ENCODE measurements at regions of chr9 and their contacts with region 1.

Region 1: GRCh38 chr9:113484258-113484730 is 20.8 kb downstream of the RGS3 start:
- DNase-seq: no peak

Region 2: DNA sequence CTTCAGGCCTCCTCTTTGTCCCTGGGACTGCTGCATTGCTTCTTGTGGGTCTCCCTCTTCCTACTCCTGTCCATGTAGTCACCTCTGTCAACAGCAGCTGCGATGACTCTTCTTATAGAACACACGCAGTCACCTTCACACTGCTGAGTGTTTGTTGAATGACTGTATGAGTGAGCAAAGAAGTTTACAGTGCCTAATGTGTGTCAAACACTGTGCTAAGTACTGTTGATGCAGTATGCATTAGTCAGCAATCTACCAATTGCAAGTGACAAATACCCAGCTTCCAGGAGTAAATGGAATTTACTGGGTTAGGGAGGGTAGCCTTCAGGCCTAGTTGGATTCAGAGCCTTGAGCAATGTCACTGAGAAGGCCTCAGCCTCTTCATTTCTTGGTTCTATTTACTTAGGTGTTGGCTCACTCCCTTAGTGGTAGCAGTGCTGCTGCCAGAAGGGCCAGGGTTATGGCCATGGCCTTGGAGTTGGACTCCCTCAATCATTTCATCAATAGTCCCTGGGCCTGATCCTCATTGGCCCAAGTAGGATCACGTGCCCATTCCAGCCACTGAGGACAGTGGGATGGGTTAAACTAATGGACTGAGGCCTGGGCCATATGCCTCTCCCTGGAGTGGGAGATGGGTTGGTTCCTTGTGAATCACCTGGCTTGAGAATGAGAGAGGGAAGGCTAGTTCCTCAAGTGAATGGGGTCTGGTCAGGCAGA is 72.7 kb after region 1 on chr9:
- intact Hi-C with region 1: loop called in 1 of 2 experiments (anchors 2 kb)
- DNase-seq: peak; percentile 44

Region 3: GRCh38 chr9:113568571-113569321 is 84.5 kb after region 1 on chr9:
- intact Hi-C with region 1: no loop called
- DNase-seq: peak; percentile 54

Region 4: DNA sequence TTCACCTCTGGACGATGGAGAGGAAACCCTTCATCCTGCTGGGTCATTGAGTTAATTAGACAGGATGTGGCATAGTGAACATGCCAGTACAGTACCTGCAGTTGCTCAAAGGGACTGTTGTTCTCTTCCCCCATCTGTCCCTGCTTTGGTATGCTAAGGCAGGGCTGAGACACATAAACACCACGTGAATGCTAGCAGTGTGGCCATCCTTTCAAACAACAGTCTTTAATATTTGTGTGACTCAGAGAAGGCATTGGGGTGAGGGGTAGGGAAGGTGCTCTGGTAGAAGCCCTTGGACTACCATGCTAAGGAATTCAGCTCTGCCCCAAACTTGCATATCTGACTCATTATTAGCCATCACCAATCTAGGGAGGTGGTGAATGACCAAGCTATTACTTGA is 211.6 kb after region 1 on chr9:
- intact Hi-C with region 1: no loop called
- DNase-seq: no peak